ENCODE measurements at regions of chr19 and their contacts with region 1.

Region 1: DNA sequence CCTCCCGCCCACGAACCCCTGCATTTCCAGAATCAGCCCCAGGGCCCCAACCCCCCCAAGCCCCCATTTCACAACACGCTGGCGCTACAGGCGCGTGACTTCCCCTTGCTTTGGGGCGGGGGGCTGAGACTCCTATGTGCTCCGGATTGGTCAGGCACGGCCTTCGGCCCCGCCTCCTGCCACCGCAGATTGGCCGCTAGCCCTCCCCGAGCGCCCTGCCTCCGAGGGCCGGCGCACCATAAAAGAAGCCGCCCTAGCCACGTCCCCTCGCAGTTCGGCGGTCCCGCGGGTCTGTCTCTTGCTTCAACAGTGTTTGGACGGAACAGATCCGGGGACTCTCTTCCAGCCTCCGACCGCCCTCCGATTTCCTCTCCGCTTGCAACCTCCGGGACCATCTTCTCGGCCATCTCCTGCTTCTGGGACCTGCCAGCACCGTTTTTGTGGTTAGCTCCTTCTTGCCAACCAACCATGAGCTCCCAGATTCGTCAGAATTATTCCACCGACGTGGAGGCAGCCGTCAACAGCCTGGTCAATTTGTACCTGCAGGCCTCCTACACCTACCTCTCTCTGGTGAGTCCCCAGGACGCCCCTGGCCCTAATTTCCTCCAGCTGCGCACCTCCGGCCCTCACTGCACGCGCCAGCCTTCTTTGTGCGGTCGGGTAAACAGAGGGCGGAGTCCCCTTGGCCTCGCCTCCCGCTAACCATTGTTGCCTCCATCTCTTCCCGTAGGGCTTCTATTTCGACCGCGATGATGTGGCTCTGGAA is at the start of gene FTL:
- DNase-seq: peak; percentile 94
- ATAC-seq: peak; percentile 74
- H3K4me3 ChIP-seq: peak within 1 kb of the TSS; percentile 78
- H3K27ac ChIP-seq: peak within 1 kb of the TSS; percentile 96
- H3K4me1 ChIP-seq: peaks cover 20% of the 10 kb centered on the region
- H3K27me3 ChIP-seq: no peaks in the 10 kb centered on the region
- CTCF ChIP-seq: no peak
- POLR2A ChIP-seq: peak; percentile 99
- RAD21 ChIP-seq: no peak
- total RNA-seq, gene FTL: 913 and 1,057 TPM in 2 replicates

Region 2: DNA sequence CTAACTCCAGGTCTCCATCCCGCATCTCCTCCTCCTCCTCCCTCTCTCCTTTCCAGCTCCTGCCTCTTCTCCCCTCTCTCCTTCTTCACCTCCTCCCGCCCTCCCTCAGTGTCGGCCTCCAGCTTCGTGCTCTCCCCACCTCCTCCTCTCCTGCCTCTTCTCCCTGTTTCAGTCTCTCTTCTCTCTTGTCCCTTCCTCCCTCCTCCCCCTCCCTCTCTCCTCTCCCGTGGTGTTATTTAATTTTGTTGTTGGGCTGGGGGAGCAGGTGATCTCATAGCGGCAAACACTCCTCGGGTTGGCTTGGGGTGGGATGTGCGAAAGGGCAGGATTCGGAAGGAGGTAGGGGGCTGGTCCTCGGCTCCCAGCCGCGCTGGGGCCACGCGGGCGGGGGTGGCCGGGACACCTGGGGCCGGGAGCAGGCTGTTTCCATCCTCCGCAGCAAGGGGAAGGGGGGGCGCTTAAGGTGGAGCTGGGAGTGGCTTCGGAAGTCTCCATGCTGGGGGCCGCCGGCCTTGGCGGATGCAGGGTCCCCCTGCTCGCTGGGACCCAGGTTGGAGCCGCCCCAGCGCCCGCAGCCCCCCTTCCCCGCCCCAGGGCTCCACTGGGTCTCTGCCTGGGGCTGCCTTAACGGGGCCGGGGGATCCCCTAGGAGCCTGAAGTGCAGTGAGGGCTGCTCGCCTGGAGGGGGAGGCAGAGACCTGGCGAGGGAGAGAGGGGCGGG is 319.1 kb before region 1 on chr19 and contains the start of gene CA11:
- CTCF ChIA-PET with region 1: interaction called, 4 read pairs
- POLR2A ChIA-PET with region 1: no interaction called
- dilution Hi-C with region 1: no loop called
- in situ Hi-C with region 1: loop called (anchors 10 kb)
- intact Hi-C with region 1: loop called (anchors 10 kb)
- DNase-seq: peak; percentile 72
- ATAC-seq: peak; percentile 96
- H3K4me3 ChIP-seq: peak within 1 kb of the TSS; percentile 44
- H3K27ac ChIP-seq: peak within 1 kb of the TSS; percentile 21; the same call in 1 of the 2 replicates
- H3K4me1 ChIP-seq: peaks cover 5% of the 10 kb centered on the region
- H3K27me3 ChIP-seq: no peaks in the 10 kb centered on the region
- CTCF ChIP-seq: peak; percentile 87
- POLR2A ChIP-seq: peak; percentile 29; the same call in 1 of the 2 replicates
- RAD21 ChIP-seq: peak; percentile 87
- total RNA-seq, gene CA11: 1.3 and 1.7 TPM in 2 replicates

Region 3: DNA sequence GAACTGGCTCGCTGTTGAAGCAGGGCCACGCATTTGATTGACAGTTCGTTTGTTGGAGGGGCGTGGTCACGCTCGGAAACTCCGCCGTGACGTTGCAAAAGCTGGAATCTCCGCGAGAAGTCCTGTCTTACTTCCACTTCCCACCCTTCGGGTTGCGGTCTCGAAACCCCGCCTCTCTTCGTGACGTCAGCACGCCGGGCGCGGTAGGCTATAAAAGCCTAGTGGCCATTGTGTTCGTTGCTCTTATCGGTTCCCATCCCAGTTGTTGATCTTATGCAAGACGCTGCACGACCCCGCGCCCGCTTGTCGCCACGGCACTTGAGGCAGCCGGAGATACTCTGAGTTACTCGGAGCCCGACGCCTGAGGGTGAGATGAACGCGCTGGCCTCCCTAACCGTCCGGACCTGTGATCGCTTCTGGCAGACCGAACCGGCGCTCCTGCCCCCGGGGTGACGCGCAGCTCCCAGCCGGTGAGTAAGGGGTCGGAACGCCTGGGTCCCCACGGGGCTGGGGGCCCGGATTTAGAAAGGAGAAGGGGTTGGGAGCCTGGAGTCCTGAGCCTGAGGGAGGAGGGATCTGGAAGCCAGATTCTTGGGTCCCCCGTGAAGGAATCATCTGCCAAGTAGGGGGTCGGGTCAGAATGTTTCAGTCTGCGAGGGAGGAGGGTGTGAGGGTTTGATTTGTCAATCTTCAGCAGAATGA is 92.9 kb before region 1 on chr19 and contains the start of gene PPP1R15A:
- CTCF ChIA-PET with region 1: interaction called, 3 read pairs
- POLR2A ChIA-PET with region 1: interaction called, 4 read pairs
- dilution Hi-C with region 1: no loop called
- in situ Hi-C with region 1: no loop called
- intact Hi-C with region 1: loop called (anchors 2 kb)
- DNase-seq: peak; percentile 97
- ATAC-seq: peak; percentile 28
- H3K4me3 ChIP-seq: peak within 1 kb of the TSS; percentile 71
- H3K27ac ChIP-seq: peak within 1 kb of the TSS; percentile 92
- H3K4me1 ChIP-seq: peaks cover 15% of the 10 kb centered on the region
- H3K27me3 ChIP-seq: no peaks in the 10 kb centered on the region
- CTCF ChIP-seq: no peak
- POLR2A ChIP-seq: peak; percentile 100
- RAD21 ChIP-seq: no peak
- total RNA-seq, gene PPP1R15A: 26.7 and 39.4 TPM in 2 replicates

Region 4: GRCh38 chr19:48890551-48890950 is 74.7 kb before region 1 on chr19:
- CTCF ChIA-PET with region 1: no interaction called
- POLR2A ChIA-PET with region 1: no interaction called
- dilution Hi-C with region 1: no loop called
- in situ Hi-C with region 1: loop called (anchors 5 kb)
- intact Hi-C with region 1: no loop called
- DNase-seq: no peak
- ATAC-seq: no peak
- H3K4me3 ChIP-seq: no peak overlapping the region
- H3K27ac ChIP-seq: no peak overlapping the region
- H3K4me1 ChIP-seq: no peaks in the 10 kb centered on the region
- H3K27me3 ChIP-seq: 0 out of 2 replicates have a peak, but pooled peaks cover 2% of the 10 kb centered on the region
- CTCF ChIP-seq: no peak
- POLR2A ChIP-seq: no peak
- RAD21 ChIP-seq: no peak

Region 5: GRCh38 chr19:48925240-48925843 is 39.9 kb before region 1 on chr19:
- CTCF ChIA-PET with region 1: no interaction called
- POLR2A ChIA-PET with region 1: interaction called, 11 read pairs
- dilution Hi-C with region 1: no loop called
- in situ Hi-C with region 1: no loop called
- intact Hi-C with region 1: no loop called
- DNase-seq: peak; percentile 91
- ATAC-seq: peak; percentile 62
- H3K4me3 ChIP-seq: no peak overlapping the region
- H3K27ac ChIP-seq: no peak overlapping the region
- H3K4me1 ChIP-seq: peaks cover 11% of the 10 kb centered on the region
- H3K27me3 ChIP-seq: no peaks in the 10 kb centered on the region
- CTCF ChIP-seq: no peak
- POLR2A ChIP-seq: no peak
- RAD21 ChIP-seq: no peak